CD4-positive, alpha-beta T cell (primary cell): ENCODE measurements at regions of chr10 and their contacts with region 1.

Region 1: GRCh38 chr10:110210674-110211464 is 3.5 kb downstream of the MXI1 start:
- DNase-seq: peak; percentile 84 to 96 (median 87)
- ATAC-seq: peak; percentile 41
- H3K4me3 ChIP-seq: peak overlapping the region; percentile 94
- H3K4me3 Mint-ChIP-seq: peak overlapping the region; percentile 99
- H3K27ac ChIP-seq: peak overlapping the region; percentile 85 to 98
- H3K27ac Mint-ChIP-seq: peak overlapping the region; percentile 100
- H3K4me1 ChIP-seq: peaks cover 76% of the 10 kb centered on the region
- H3K4me1 Mint-ChIP-seq: peaks cover 58% of the 10 kb centered on the region
- H3K27me3 ChIP-seq: no peaks in the 10 kb centered on the region
- H3K27me3 Mint-ChIP-seq: peaks cover 5% of the 10 kb centered on the region
- CTCF ChIP-seq: no peak

Region 2: DNA sequence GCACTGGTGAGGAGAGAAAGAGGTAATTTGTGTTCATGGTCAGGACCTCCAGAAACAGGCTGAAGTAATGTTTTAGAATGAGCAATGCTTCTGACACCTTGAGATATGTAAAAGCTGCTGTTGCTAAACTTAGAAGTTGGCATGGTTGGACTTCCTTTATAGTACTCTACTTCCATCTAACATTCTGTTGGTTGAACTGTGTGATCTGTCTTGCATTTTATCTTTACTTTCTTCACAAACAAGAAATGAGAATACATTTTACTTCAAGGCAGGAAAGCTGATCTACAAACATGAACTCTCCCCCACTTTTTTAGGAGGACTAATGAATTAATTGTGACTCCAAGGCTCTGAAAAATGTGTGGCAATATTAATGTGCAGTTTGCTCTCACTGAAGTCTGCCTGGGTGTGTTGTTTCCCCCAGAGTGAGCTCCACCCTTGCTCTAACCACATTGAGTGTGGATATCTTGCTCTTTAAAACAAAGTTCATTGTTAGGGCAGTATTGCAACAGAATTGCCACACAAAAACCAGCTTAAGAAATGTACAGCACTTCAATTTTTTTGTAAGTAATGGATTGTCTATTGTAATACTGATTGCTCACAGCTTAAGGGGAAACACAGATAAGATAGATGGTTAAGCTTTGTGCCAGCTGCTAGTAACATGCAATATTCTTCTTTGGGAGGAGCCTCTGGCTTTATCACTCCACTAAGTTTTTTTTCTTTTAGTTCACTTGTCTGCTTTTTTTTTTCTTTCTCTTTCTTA is 134.1 kb before region 1 on chr10:
- CTCF ChIA-PET with region 1: interaction called, 3 read pairs
- POLR2A ChIA-PET with region 1: interaction called, 16 read pairs
- intact Hi-C with region 1: no loop called
- DNase-seq: peak in 9 of 14 experiments; percentile 12 to 82 (median 29)
- ATAC-seq: peak; percentile 72
- H3K4me3 ChIP-seq: peak overlapping the region; percentile 54
- H3K4me3 Mint-ChIP-seq: peak overlapping the region; percentile 80
- H3K27ac ChIP-seq: peak overlapping the region; percentile 19 to 66
- H3K27ac Mint-ChIP-seq: peak overlapping the region; percentile 85
- H3K4me1 ChIP-seq: peaks cover 54% of the 10 kb centered on the region
- H3K4me1 Mint-ChIP-seq: peaks cover 88% of the 10 kb centered on the region
- H3K27me3 ChIP-seq: no peaks in the 10 kb centered on the region
- H3K27me3 Mint-ChIP-seq: no peaks in the 10 kb centered on the region
- CTCF ChIP-seq: no peak

Region 3: GRCh38 chr10:110158051-110159005 is 52.5 kb before region 1 on chr10:
- CTCF ChIA-PET with region 1: interaction called, 4 read pairs
- POLR2A ChIA-PET with region 1: interaction called, 88 read pairs
- intact Hi-C with region 1: loop called in 1 of 2 experiments (anchors 5 kb)
- DNase-seq: no peak
- ATAC-seq: no peak
- H3K4me3 ChIP-seq: no peak overlapping the region
- H3K4me3 Mint-ChIP-seq: no peak overlapping the region
- H3K27ac ChIP-seq: no peak overlapping the region
- H3K27ac Mint-ChIP-seq: no peak overlapping the region
- H3K4me1 ChIP-seq: peaks cover 19% of the 10 kb centered on the region
- H3K4me1 Mint-ChIP-seq: peaks cover 16% of the 10 kb centered on the region
- H3K27me3 ChIP-seq: peaks cover 51% of the 10 kb centered on the region in 2 experiments
- H3K27me3 Mint-ChIP-seq: peaks cover 89% of the 10 kb centered on the region
- CTCF ChIP-seq: no peak

Region 4: GRCh38 chr10:110279407-110279986 is 68.6 kb after region 1 on chr10:
- CTCF ChIA-PET with region 1: interaction called, 39 read pairs
- POLR2A ChIA-PET with region 1: interaction called, 28 read pairs
- intact Hi-C with region 1: loop called (anchors 1 to 5 kb)
- DNase-seq: peak in 13 of 14 experiments; percentile 9 to 80 (median 28)
- ATAC-seq: peak; percentile 78
- H3K4me3 ChIP-seq: no peak overlapping the region
- H3K4me3 Mint-ChIP-seq: no peak overlapping the region
- H3K27ac ChIP-seq: no peak overlapping the region
- H3K27ac Mint-ChIP-seq: no peak overlapping the region
- H3K4me1 ChIP-seq: peaks cover 5% of the 10 kb centered on the region
- H3K4me1 Mint-ChIP-seq: peaks cover 44% of the 10 kb centered on the region
- H3K27me3 ChIP-seq: no peaks in the 10 kb centered on the region
- H3K27me3 Mint-ChIP-seq: no peaks in the 10 kb centered on the region
- CTCF ChIP-seq: peak; percentile 70

Region 5: DNA sequence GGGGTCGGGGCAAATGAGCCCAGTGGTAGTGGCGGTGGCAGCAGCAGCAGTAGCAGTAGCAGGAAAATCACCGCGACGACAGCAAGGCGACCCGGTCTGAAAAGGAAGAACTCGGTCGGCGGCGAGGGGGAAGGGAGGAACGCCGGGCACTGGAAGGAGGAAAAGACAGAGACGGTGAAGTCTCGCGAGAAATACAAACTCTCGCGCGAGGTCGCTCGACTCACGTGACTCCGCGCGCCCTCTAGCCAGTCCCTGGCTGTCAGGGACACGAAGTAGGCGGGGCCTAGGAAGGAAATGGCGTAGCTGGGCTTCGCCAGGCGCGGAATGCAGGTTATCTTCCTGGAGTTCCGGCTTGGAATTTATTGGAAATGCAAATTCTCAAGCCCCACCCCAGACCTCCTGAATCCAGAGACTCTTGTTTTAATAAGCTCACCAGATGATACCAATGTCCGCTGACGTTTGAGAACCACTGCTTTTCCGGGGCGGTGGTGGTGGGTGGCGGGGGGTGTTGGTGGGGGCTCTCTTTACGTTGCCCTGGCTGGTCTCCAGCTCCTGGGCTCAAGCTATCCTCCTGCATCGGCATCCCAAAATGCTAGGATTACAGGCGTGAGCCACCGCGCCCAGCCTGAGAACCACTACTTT is 94.0 kb after region 1 on chr10 and contains the start of gene SMNDC1:
- CTCF ChIA-PET with region 1: interaction called, 5 read pairs
- POLR2A ChIA-PET with region 1: interaction called, 82 read pairs
- intact Hi-C with region 1: no loop called
- DNase-seq: peak; percentile 94 to 99 (median 96)
- ATAC-seq: peak; percentile 88
- H3K4me3 ChIP-seq: peak within 1 kb of the TSS; percentile 72
- H3K4me3 Mint-ChIP-seq: peak within 1 kb of the TSS; percentile 97
- H3K27ac ChIP-seq: peak within 1 kb of the TSS; percentile 74 to 90
- H3K27ac Mint-ChIP-seq: peak within 1 kb of the TSS; percentile 98
- H3K4me1 ChIP-seq: peaks cover 23% of the 10 kb centered on the region
- H3K4me1 Mint-ChIP-seq: peaks cover 61% of the 10 kb centered on the region
- H3K27me3 ChIP-seq: no peaks in the 10 kb centered on the region
- H3K27me3 Mint-ChIP-seq: no peaks in the 10 kb centered on the region
- CTCF ChIP-seq: no peak
- total RNA-seq, gene SMNDC1: 40.2 to 48.1 TPM

Region 6: GRCh38 chr10:110724116-110724921 is 513.5 kb after region 1 on chr10:
- CTCF ChIA-PET with region 1: no interaction called
- POLR2A ChIA-PET with region 1: no interaction called
- intact Hi-C with region 1: no loop called
- DNase-seq: peak in 2 of 14 experiments; percentile 29 to 38
- ATAC-seq: peak; percentile 71
- H3K4me3 ChIP-seq: peak overlapping the region; percentile 11
- H3K4me3 Mint-ChIP-seq: peak overlapping the region; percentile 73
- H3K27ac ChIP-seq: peak overlapping the region; percentile 23 to 79
- H3K27ac Mint-ChIP-seq: peak overlapping the region; percentile 79
- H3K4me1 ChIP-seq: peaks cover 32% of the 10 kb centered on the region
- H3K4me1 Mint-ChIP-seq: peaks cover 53% of the 10 kb centered on the region
- H3K27me3 ChIP-seq: no peaks in the 10 kb centered on the region
- H3K27me3 Mint-ChIP-seq: no peaks in the 10 kb centered on the region
- CTCF ChIP-seq: no peak